ENCODE measurements at regions of chr17 and their contacts with region 1.

Region 1: GRCh38 chr17:27586203-27586721 is 44.7 kb upstream of the LGALS9 start:
- DNase-seq: no peak
- ATAC-seq: peak in 4 of 8 donors; percentile 5 to 26 (median 17)
- H3K4me3 ChIP-seq: no peak overlapping the region
- H3K27ac ChIP-seq: peak overlapping the region in 1 of 10 donors; percentile 41
- H3K4me1 ChIP-seq: peaks cover 0 to 9% (median 0%) of the 10 kb centered on the region in 9 donors
- H3K27me3 ChIP-seq: no peaks in the 10 kb centered on the region
- CTCF ChIP-seq: no peak

Region 2: GRCh38 chr17:27494192-27495091 is 91.8 kb before region 1 on chr17:
- intact Hi-C with region 1: loop called in 4 of 10 experiments (anchors 10 kb)
- DNase-seq: peak; percentile 23 to 63
- ATAC-seq: peak; percentile 49 to 87 (median 70)
- H3K4me3 ChIP-seq: no peak overlapping the region
- H3K27ac ChIP-seq: peak overlapping the region in 4 of 10 donors; percentile 14 to 73 (median 23)
- H3K4me1 ChIP-seq: peaks cover under 1 to 42% (median 30%) of the 10 kb centered on the region in 9 donors
- H3K27me3 ChIP-seq: no peaks in the 10 kb centered on the region
- CTCF ChIP-seq: peak in 7 of 9 donors; percentile 26 to 61 (median 43)

Region 3: DNA sequence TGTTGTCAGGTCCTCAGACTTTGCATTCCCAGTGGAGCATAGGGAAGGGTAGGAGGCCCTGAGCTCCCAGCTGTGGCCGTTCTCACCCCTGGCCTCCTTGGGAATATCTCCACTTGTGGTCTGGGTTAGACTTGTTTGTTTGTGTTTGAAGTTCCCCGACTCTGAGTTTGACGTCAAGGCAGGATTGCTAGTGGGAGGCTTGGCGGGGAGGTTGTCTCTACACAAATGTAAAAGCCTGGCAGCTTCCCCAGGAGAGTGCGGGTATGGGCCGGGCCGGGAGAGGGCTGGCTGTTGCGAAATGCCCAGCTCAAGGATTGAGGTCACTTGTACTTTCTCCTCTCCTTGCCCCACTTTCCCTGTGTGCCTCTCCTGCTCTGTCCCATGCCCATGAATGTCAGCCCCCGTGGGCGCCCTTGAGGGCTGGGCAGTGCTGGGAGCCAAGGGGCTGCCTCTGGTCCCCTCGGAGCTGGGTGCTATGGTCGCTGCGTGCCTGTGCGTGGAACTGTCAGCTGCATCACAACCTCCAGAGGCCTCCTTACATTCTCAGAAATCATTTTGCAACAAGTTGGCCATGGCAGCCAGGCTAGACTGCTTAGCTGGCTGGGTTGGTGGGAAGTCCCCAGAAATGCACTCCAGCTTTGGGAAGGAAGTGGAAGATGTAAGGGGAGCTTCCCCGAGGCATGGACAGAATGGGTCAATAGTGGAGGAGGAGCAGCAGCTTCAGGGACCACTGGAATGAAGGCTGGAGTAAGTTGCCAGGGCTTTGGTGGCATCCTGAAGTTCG is 45.8 kb before region 1 on chr17:
- intact Hi-C with region 1: no loop called
- DNase-seq: peak; percentile 71 to 73
- ATAC-seq: peak; percentile 70 to 91 (median 78)
- H3K4me3 ChIP-seq: no peak overlapping the region
- H3K27ac ChIP-seq: peak overlapping the region in 6 of 10 donors; percentile 5 to 90 (median 46)
- H3K4me1 ChIP-seq: peaks cover 4 to 59% (median 17%) of the 10 kb centered on the region in 9 donors
- H3K27me3 ChIP-seq: no peaks in the 10 kb centered on the region
- CTCF ChIP-seq: no peak

Region 4: DNA sequence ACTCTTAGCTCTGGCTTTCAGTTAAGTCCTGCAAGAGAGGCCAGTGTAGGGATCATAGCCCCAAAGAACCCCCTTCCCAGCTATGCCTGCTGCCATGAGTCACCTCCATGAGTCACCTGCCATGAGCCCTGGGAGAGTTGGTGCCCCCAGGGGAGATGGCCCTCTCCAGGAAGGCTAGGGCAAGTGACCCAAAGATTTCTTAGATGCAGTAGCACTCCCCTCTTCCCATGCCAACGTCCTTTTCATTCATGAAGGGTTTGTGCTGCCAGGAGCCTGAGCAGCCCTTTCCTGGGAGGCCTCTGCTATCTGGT is 33.8 kb before region 1 on chr17:
- intact Hi-C with region 1: loop called in 1 of 10 experiments (anchors 5 kb)
- DNase-seq: no peak
- ATAC-seq: no peak
- H3K4me3 ChIP-seq: no peak overlapping the region
- H3K27ac ChIP-seq: no peak overlapping the region
- H3K4me1 ChIP-seq: peaks cover 2 to 46% (median 18%) of the 10 kb centered on the region in 9 donors
- H3K27me3 ChIP-seq: no peaks in the 10 kb centered on the region
- CTCF ChIP-seq: no peak

Region 5: DNA sequence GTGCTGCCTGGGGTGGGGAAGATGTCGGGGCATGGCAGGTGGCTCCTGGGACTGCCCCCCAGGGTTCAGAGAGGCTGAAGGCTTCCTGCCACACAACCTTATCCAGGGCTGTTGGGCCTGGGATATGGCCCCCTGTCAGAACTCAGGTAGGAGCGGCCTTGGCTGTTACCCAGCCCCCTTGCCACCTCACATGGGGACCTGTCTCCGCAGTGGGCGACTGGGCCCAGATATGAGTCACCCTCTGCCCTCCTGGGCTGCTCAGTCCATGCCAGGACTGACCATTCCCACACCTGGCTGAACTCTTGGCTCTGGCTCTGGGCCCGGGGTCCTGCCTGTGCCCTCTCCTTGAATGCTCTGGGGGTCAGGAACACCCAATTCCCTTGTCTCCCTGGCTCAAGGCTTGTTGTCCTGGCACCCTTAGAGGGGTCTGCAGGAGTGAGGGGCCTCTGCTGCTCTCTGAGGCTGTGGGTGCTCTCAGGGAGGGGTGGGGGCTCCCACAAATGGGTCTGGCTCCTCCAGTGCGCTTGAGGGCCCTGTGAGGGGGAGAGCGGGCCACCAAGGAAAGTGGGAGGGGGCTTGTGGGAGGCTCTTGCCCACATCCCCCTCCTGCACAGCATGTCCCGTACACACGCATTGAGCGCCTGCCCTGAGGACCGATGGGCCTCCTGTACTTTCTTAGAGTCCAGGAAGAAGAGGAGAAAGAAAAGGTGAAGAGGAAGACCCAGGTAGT is 80.7 kb after region 1 on chr17:
- intact Hi-C with region 1: loop called in 1 of 10 experiments (anchors 10 kb)
- DNase-seq: no peak
- ATAC-seq: no peak
- H3K4me3 ChIP-seq: no peak overlapping the region
- H3K27ac ChIP-seq: no peak overlapping the region
- H3K4me1 ChIP-seq: no peaks in the 10 kb centered on the region
- H3K27me3 ChIP-seq: no peaks in the 10 kb centered on the region
- CTCF ChIP-seq: no peak

Measured in heart right ventricle (tissue), 16 donors.